Esophagus muscularis mucosa (tissue), 4 donors: ENCODE measurements at regions of chr11 and their contacts with region 1.

Region 1: GRCh38 chr11:74170694-74171629 is at the starts of genes C2CD3 and PPME1:
- DNase-seq: peak; percentile 99
- H3K4me3 ChIP-seq: peak within 1 kb of the TSS; percentile 60 to 86 (median 77)
- H3K27ac ChIP-seq: peak within 1 kb of the TSS; percentile 86 to 93 (median 90)
- H3K4me1 ChIP-seq: peaks cover 22 to 46% (median 37%) of the 10 kb centered on the region in 4 donors
- H3K27me3 ChIP-seq: no peaks in the 10 kb centered on the region
- CTCF ChIP-seq: peak; percentile 12 to 48 (median 28)
- EP300 ChIP-seq: no peak
- POLR2A ChIP-seq: peak; percentile 63
- total RNA-seq, gene C2CD3: 17.9 to 31.5 (median 22.4) TPM
- total RNA-seq, gene PPME1: 25.3 to 45.2 (median 31.0) TPM

Region 2: GRCh38 chr11:73750228-73750627 is 420.7 kb before region 1 on chr11:
- intact Hi-C with region 1: no loop called
- DNase-seq: no peak
- H3K4me3 ChIP-seq: no peak overlapping the region
- H3K27ac ChIP-seq: no peak overlapping the region
- H3K4me1 ChIP-seq: peaks cover 10 to 62% (median 55%) of the 10 kb centered on the region in 4 donors
- H3K27me3 ChIP-seq: no peaks in the 10 kb centered on the region
- CTCF ChIP-seq: no peak
- EP300 ChIP-seq: no peak
- POLR2A ChIP-seq: no peak

Region 3: GRCh38 chr11:74138572-74138971 is 32.4 kb before region 1 on chr11:
- intact Hi-C with region 1: loop called (anchors 5 kb)
- DNase-seq: no peak
- H3K4me3 ChIP-seq: peak overlapping the region in 2 of 4 donors; percentile 3 to 4
- H3K27ac ChIP-seq: peak overlapping the region; percentile 76 to 81 (median 78)
- H3K4me1 ChIP-seq: peaks cover 17 to 57% (median 33%) of the 10 kb centered on the region in 4 donors
- H3K27me3 ChIP-seq: no peaks in the 10 kb centered on the region
- CTCF ChIP-seq: no peak
- EP300 ChIP-seq: no peak
- POLR2A ChIP-seq: no peak